ENCODE measurements at regions of chr19 and their contacts with region 1.

Region 1: GRCh38 chr19:39187559-39187957 is 9.2 kb upstream of the NCCRP1 start:
- DNase-seq: no peak
- H3K4me3 ChIP-seq: no peak overlapping the region
- H3K27ac ChIP-seq: no peak overlapping the region
- H3K4me1 ChIP-seq: no peaks in the 10 kb centered on the region
- H3K27me3 ChIP-seq: no peaks in the 10 kb centered on the region
- CTCF ChIP-seq: no peak
- POLR2A ChIP-seq: no peak

Region 2: DNA sequence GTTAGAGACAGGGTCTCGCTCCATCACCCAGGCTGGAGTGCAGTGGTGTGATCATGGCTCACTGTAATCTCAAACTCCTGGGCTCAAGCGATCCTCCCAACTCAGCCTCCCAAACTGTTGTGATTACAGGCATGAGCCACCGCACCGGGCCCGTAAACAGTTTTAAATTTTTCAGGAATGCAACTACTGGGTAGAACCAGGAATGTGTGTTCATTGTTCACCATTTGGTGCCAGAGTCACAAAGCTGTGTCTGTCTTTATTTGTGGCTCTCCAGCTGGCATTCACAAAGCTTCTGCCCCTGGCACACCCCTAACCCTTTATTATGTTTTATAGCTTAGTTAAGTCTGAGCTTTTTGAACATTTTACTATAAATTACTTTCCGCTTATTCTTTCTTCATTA is 123.2 kb before region 1 on chr19:
- intact Hi-C with region 1: no loop called
- DNase-seq: no peak
- H3K4me3 ChIP-seq: no peak overlapping the region
- H3K27ac ChIP-seq: no peak overlapping the region
- H3K4me1 ChIP-seq: no peaks in the 10 kb centered on the region
- H3K27me3 ChIP-seq: no peaks in the 10 kb centered on the region
- CTCF ChIP-seq: no peak
- POLR2A ChIP-seq: no peak

Region 3: DNA sequence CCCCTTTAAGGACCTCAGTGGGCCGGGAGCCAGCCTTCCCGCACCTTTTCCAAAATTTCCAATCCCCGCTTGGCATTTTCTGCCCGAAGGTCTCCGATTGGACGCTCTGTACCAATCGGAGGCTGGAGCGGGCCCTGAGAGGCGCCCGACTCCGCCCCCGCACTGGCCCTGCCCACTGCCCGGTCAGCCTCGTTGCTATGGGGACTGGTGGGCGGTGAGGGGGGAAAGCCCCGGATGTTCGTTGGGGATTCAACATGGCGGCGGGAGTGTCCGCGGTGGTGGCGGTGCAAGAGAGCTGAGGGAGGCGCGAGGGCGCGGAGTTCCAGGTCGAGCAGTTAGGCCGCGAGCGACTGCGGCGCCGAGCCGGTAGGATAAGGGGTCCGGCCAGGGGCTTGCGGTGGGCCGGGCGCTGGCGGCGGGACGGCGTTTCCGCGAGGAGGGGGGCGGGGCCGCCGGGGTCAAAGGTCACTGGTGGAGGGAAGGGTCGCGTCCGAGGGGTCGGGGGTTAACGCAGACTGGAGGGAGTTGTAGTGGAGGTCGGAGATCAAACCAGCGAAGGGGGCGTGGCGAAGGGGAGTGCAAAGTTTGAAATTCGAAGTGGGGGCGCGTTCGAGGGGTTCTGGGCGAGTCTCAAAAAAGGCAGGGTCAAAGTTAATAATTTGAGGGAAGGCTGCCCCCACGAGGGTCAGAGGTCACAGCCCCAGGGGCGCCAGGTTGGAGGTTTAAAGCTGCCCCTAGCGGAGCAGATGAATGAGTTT is 61.8 kb before region 1 on chr19 and contains the start of gene PAK4:
- intact Hi-C with region 1: loop called (anchors 10 kb)
- DNase-seq: peak; percentile 98
- H3K4me3 ChIP-seq: peak within 1 kb of the TSS; percentile 62 to 95
- H3K27ac ChIP-seq: peak within 1 kb of the TSS; percentile 89
- H3K4me1 ChIP-seq: peaks cover 10 to 18% of the 10 kb centered on the region in 2 donors
- H3K27me3 ChIP-seq: no peaks in the 10 kb centered on the region
- CTCF ChIP-seq: no peak
- POLR2A ChIP-seq: peak; percentile 54 to 80
- total RNA-seq, gene PAK4: 0.26 to 57.4 (median 24.3) TPM